Activated B cell treated with CpG ODN at 0.5 μM for 24 hours (primary cell): ENCODE measurements at regions of chr14 and their contacts with region 1.

Region 1: DNA sequence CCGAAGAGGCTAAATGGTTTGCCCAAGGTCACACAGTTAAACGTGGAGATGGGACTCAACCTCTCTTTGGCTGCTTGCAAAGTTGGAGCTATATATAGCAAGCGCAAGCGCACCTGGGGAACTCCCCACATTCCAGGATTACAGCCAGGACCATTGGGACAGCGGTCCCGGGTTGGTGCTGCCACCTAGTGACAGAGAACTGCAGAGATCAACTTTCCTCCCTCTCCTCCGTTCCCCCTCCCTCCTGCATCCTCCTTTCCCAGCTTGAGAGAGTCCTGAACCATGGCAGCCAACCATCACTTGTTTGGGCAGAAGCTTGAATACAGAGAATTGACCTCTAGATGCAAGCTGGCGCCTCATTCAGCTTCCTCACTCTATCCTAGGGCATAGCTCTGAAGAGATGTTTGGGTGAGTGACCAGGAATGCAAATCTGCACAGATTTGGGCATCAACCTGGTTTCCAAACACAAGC is 17.4 kb upstream of the FLVCR2 start:
- DNase-seq: no peak
- ATAC-seq: peak; percentile 46
- H3K4me3 Mint-ChIP-seq: peak overlapping the region; percentile 42
- H3K27ac Mint-ChIP-seq: peak overlapping the region; percentile 41
- H3K4me1 Mint-ChIP-seq: peaks cover 37% of the 10 kb centered on the region
- H3K27me3 Mint-ChIP-seq: no peaks in the 10 kb centered on the region
- CTCF ChIP-seq: peak; percentile 40

Region 2: GRCh38 chr14:75132382-75133086 is 428.5 kb before region 1 on chr14:
- CTCF ChIA-PET with region 1: interaction called, 11 read pairs
- POLR2A ChIA-PET with region 1: interaction called, 3 read pairs
- intact Hi-C with region 1: loop called (anchors 5 kb)
- DNase-seq: no peak
- ATAC-seq: peak; percentile 87
- H3K4me3 Mint-ChIP-seq: no peak overlapping the region
- H3K27ac Mint-ChIP-seq: no peak overlapping the region
- H3K4me1 Mint-ChIP-seq: peaks cover 16% of the 10 kb centered on the region
- H3K27me3 Mint-ChIP-seq: no peaks in the 10 kb centered on the region
- CTCF ChIP-seq: peak; percentile 51

Region 3: GRCh38 chr14:75497191-75497590 is 63.8 kb before region 1 on chr14:
- CTCF ChIA-PET with region 1: interaction called, 11 read pairs
- POLR2A ChIA-PET with region 1: no interaction called
- intact Hi-C with region 1: loop called (anchors 2 kb)
- DNase-seq: no peak
- ATAC-seq: peak; percentile 71
- H3K4me3 Mint-ChIP-seq: peak overlapping the region; percentile 46
- H3K27ac Mint-ChIP-seq: peak overlapping the region; percentile 77
- H3K4me1 Mint-ChIP-seq: peaks cover 65% of the 10 kb centered on the region
- H3K27me3 Mint-ChIP-seq: no peaks in the 10 kb centered on the region
- CTCF ChIP-seq: no peak

Region 4: GRCh38 chr14:75531660-75532317 is 29.2 kb before region 1 on chr14:
- CTCF ChIA-PET with region 1: interaction called, 13 read pairs
- POLR2A ChIA-PET with region 1: interaction called, 4 read pairs
- intact Hi-C with region 1: no loop called
- DNase-seq: no peak
- ATAC-seq: no peak
- H3K4me3 Mint-ChIP-seq: no peak overlapping the region
- H3K27ac Mint-ChIP-seq: peak overlapping the region; percentile 9
- H3K4me1 Mint-ChIP-seq: peaks cover 59% of the 10 kb centered on the region
- H3K27me3 Mint-ChIP-seq: no peaks in the 10 kb centered on the region
- CTCF ChIP-seq: no peak

Region 5: GRCh38 chr14:75577729-75578101 is 16.7 kb after region 1 on chr14:
- CTCF ChIA-PET with region 1: interaction called, 24 read pairs
- POLR2A ChIA-PET with region 1: interaction called, 6 read pairs
- intact Hi-C with region 1: no loop called
- DNase-seq: peak; percentile 60
- ATAC-seq: peak; percentile 85
- H3K4me3 Mint-ChIP-seq: peak overlapping the region; percentile 89
- H3K27ac Mint-ChIP-seq: peak overlapping the region; percentile 72
- H3K4me1 Mint-ChIP-seq: peaks cover 29% of the 10 kb centered on the region
- H3K27me3 Mint-ChIP-seq: peaks cover 3% of the 10 kb centered on the region
- CTCF ChIP-seq: peak; percentile 36

Region 6: GRCh38 chr14:75720842-75721498 is 160.0 kb after region 1 on chr14:
- CTCF ChIA-PET with region 1: no interaction called
- POLR2A ChIA-PET with region 1: no interaction called
- intact Hi-C with region 1: no loop called
- DNase-seq: no peak
- ATAC-seq: no peak
- H3K4me3 Mint-ChIP-seq: no peak overlapping the region
- H3K27ac Mint-ChIP-seq: no peak overlapping the region
- H3K4me1 Mint-ChIP-seq: no peaks in the 10 kb centered on the region
- H3K27me3 Mint-ChIP-seq: no peaks in the 10 kb centered on the region
- CTCF ChIP-seq: no peak